Heart right ventricle (tissue), 16 donors: ENCODE measurements at regions of chr12 and their contacts with region 1.

Region 1: DNA sequence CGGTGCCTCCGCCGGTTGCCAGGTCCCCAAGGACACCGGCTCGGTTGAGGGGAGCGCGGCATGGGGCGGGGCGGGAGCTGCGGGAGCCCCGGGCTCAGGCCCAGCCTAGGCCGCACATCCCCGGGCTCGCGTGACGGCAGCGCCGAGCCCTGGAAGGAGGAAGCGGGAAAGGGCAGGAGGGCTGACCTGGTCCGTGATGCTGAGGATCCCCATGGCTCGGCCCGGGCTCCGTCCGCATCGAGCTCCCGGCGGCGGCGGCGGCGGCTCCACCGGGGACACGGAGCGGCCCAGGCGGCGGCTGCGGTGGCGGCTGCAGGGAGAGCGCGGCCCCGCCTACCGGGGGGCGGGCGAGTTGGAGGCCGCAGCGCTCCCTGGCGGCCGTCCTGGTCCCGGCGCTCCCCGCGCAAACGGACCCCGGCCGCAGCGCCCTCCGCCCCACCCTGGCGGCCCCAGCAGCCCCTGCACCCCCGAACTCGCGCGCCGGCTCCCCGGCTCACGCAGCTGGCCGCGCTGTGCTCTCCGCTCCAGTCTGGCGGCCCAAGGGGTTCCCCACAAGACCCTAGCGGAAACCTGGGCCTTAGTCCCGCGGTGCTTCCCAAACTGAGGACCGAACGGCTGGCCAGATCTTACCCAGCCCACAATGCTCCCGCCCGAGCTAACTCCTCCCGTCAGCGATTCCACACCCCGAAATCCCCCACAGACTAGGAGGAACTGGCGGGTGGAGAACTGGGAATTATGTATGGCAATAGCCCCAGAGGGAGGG is at the start of gene ANKRD52:
- DNase-seq: peak; percentile 71 to 80
- ATAC-seq: peak; percentile 89 to 97 (median 95)
- H3K4me3 ChIP-seq: peak within 1 kb of the TSS; percentile 78 to 99 (median 98)
- H3K27ac ChIP-seq: peak within 1 kb of the TSS; percentile 55 to 96 (median 92)
- H3K4me1 ChIP-seq: peaks cover 7 to 28% (median 22%) of the 10 kb centered on the region in 9 donors
- H3K27me3 ChIP-seq: no peaks in the 10 kb centered on the region
- CTCF ChIP-seq: peak; percentile 51 to 93 (median 83)
- total RNA-seq, gene ANKRD52: 22.2 to 30.9 (median 26.5) TPM

Region 2: DNA sequence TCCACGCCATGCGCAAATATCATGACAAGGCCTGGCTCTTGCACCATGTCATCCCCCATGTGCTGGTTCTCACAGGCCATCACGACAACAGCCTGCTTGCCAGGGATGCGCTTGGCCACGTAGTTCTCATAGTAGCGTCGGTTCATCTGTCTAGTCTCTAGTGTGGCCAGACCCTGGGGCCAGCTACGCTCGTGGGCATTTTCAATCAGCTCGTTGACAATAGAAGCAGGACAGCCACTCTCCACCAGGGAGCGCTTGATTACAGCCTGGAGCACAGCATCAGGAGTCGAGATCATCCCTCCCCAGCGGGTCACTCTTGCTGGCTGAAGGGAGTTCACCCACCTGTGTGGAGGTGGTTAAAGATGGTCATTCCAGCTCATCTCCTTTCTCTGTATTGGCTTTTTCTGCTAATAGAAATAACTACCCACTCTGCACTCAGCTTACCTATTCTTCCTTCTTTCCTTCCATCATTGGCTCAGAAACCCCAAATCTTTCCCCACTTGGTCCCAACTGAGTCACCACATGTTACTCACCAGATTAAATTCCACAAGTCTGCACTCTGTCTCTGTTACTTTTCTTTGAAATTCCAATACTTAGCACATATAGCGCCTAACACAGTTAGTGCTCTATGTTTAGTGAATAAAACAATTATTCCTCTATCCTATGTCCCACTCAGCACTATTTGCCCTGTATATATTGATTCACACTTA is 51.6 kb before region 1 on chr12:
- intact Hi-C with region 1: loop called in 1 of 10 experiments (anchors 5 kb)
- DNase-seq: peak; percentile 24 to 55
- ATAC-seq: peak; percentile 36 to 75 (median 64)
- H3K4me3 ChIP-seq: no peak overlapping the region
- H3K27ac ChIP-seq: peak overlapping the region in 2 of 10 donors; percentile 16 to 42
- H3K4me1 ChIP-seq: peaks cover 0 to 22% (median 3%) of the 10 kb centered on the region in 9 donors
- H3K27me3 ChIP-seq: no peaks in the 10 kb centered on the region
- CTCF ChIP-seq: peak in 8 of 9 donors; percentile 24 to 65 (median 57)

Region 3: DNA sequence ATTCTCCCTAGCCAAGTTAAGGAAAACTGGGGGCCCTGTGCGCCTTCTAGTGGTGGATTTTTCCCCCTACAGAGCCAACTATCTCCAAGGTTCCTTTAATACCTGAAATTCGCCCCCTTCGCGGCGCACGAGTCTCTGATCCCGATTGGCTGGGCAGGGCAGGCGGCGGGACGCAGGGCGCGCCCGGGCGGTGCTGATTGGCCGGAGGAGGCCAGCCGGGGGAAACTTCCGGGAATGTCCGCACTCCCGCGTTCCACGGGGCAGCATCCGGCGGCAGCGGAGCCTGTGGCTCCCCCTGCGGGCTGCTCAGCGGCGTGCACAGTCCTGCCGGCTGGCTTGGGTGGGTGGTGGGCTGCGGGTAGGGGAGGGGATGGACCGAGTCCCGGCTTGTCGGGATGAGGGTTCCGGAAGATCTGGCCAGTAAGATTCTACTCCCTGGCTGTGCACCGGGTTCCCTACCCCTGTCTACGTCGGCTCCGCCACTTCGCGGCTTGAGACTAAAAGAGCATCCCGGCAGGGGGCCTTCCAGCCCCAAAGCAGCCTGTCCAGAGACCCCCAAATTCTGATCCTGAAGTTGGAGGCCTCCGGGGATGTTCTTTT is 34.0 kb before region 1 on chr12 and contains the start of gene NABP2:
- intact Hi-C with region 1: loop called in 2 of 10 experiments (anchors 5 kb)
- DNase-seq: peak; percentile 98
- ATAC-seq: peak; percentile 83 to 92 (median 89)
- H3K4me3 ChIP-seq: peak within 1 kb of the TSS; percentile 50 to 78 (median 70)
- H3K27ac ChIP-seq: peak within 1 kb of the TSS; percentile 51 to 99 (median 88)
- H3K4me1 ChIP-seq: peaks cover 4 to 49% (median 39%) of the 10 kb centered on the region in 9 donors
- H3K27me3 ChIP-seq: no peaks in the 10 kb centered on the region
- CTCF ChIP-seq: peak; percentile 76 to 98 (median 89)
- total RNA-seq, gene NABP2: 16.2 to 25.3 (median 20.4) TPM